Pancreas (tissue), 10 donors: ENCODE measurements at regions of chr11 and their contacts with region 1.

Region 1: DNA sequence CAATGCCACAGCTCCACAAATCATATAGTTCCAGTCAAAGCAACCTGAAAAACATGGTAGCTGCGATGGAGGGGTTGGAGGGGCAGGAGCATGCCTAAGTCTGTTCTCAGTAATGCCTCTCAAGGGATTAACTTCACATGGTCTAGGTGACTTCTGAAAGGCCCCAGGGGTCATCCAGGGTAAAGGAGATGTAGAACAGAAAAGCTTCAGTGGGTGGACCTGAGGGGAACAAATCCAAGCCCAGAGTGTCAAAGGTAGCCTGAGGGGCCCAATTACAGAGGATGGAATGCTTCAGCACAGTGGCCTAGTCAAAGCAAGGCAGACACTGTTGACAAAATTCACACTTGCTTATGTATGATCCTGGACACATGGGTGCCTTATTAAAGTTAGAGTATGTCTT is 23.3 kb downstream of the OR4D9 start:
- DNase-seq: no peak
- ATAC-seq: no peak
- H3K4me3 ChIP-seq: no peak overlapping the region
- H3K27ac ChIP-seq: no peak overlapping the region
- H3K4me1 ChIP-seq: no peaks in the 10 kb centered on the region
- H3K27me3 ChIP-seq: no peaks in the 10 kb centered on the region
- CTCF ChIP-seq: no peak

Region 2: DNA sequence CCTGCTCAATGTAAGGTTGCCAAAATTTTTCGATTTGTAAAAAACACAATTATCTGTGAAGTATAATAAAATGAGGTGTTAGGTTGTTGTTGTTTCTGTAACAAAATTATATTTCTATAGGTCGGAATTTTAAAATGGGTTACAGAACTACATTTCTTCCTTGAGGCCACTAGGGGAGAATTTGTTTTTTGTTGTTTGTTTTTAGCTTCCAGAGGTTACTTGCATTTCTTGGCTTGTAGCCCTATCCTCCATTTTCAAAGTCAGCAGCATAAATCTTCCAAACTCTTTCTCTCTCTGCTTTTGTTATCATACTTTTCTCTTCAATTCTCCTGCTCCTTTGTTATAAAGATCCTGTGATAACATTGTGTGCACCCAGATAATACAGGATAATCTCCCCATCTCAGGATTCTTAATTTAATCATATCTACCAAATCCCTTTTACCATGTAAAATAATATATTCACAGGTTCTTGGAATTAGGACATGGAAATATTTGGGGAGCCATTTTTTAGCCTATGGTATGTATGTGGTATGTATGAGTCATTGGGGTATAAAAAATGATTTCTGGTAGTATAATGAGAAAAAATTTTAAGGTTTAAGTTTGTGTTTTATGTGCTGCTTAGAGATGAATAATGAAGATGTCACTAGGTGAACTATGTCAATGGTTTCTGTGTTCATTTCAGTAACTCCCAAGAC is 143.6 kb after region 1 on chr11:
- intact Hi-C with region 1: loop called in 1 of 3 experiments (anchors 5 kb)
- DNase-seq: no peak
- ATAC-seq: no peak
- H3K4me3 ChIP-seq: no peak overlapping the region
- H3K27ac ChIP-seq: no peak overlapping the region
- H3K4me1 ChIP-seq: no peaks in the 10 kb centered on the region
- H3K27me3 ChIP-seq: no peaks in the 10 kb centered on the region
- CTCF ChIP-seq: no peak